AG04449 (cell line): ENCODE measurements at regions of chr13 and their contacts with region 1.

Region 1: GRCh38 chr13:29707876-29708543 is 112.5 kb upstream of the SLC7A1 start:
- DNase-seq: no peak
- H3K4me3 ChIP-seq: no peak overlapping the region
- CTCF ChIP-seq: peak; percentile 76

Region 2: GRCh38 chr13:29516880-29517279 is 191.1 kb before region 1 on chr13:
- CTCF ChIA-PET with region 1: interaction called, 278 read pairs
- POLR2A ChIA-PET with region 1: no interaction called
- DNase-seq: no peak
- H3K4me3 ChIP-seq: no peak overlapping the region
- CTCF ChIP-seq: no peak

Region 3: GRCh38 chr13:29564818-29565217 is 143.2 kb before region 1 on chr13:
- CTCF ChIA-PET with region 1: interaction called, 13 read pairs
- POLR2A ChIA-PET with region 1: no interaction called
- DNase-seq: no peak
- H3K4me3 ChIP-seq: no peak overlapping the region
- CTCF ChIP-seq: no peak

Region 4: DNA sequence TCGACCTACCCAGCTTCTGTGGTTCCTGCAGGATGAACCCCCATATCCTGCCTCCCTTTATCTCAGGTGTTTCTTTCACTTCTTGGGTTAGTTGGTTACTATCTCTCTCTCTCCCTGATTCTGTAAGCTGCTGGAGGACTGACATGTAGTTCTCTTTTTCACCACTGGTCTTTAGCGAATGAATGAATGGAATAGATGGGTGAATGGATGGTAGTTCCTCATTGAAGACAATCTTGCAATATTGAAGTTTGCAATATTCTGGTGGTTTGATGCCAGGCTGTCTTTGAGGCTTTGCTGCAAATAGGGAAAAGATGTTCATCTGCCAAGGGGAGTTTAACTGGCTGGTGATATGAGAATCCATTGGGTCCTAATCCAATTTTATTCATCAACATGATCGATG is 22.2 kb after region 1 on chr13:
- CTCF ChIA-PET with region 1: interaction called, 19 read pairs
- POLR2A ChIA-PET with region 1: no interaction called
- DNase-seq: no peak
- H3K4me3 ChIP-seq: no peak overlapping the region
- CTCF ChIP-seq: no peak